BJ (cell line): ENCODE measurements at regions of chr3 and their contacts with region 1.

Region 1: DNA sequence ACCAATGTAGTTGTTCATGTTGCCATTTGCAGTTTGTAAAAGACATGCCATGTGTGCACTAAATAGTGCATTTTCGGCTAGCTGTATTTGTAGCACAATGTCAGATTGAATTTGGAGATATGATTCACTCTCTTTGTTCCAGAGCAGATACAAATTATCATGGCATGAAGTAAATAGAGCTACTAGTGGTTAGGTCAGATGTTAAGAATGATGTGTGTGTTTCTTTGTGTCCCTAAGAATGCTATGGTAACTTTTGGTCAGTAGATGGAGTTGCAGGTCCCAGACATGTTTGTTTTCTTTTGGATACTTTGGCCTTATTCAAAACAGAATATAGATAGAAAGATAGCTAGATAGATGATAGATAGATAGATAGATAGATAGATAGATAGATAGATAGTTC is 595.8 kb downstream of the NLGN1 start:
- DNase-seq: peak; percentile 53
- H3K4me3 ChIP-seq: no peak overlapping the region
- H3K27me3 ChIP-seq: no peaks in the 10 kb centered on the region
- CTCF ChIP-seq: peak; percentile 53

Region 2: DNA sequence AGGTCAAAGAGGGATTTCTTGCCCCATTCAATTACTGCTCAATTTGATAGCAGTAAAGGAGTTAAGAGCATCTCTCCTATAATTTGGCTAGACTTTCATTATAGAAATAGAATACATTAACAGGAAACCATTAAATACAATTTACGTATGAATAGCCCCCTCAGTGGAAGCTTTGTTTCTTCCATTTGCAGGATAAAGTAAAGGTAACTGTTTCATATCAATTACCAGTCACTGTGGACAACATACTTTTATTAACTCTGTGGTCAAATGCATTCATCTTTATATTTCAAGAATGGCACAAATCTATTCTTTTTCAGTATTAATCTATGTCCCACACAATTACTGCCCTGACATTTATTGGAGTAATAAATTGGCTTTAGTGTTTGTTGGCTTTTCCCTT is 17.6 kb after region 1 on chr3:
- CTCF ChIA-PET with region 1: interaction called, 10 read pairs
- POLR2A ChIA-PET with region 1: no interaction called
- DNase-seq: no peak
- H3K4me3 ChIP-seq: no peak overlapping the region
- H3K27me3 ChIP-seq: no peaks in the 10 kb centered on the region
- CTCF ChIP-seq: no peak